Heart right ventricle (tissue), 16 donors: ENCODE measurements at regions of chr20 and their contacts with region 1.

Region 1: DNA sequence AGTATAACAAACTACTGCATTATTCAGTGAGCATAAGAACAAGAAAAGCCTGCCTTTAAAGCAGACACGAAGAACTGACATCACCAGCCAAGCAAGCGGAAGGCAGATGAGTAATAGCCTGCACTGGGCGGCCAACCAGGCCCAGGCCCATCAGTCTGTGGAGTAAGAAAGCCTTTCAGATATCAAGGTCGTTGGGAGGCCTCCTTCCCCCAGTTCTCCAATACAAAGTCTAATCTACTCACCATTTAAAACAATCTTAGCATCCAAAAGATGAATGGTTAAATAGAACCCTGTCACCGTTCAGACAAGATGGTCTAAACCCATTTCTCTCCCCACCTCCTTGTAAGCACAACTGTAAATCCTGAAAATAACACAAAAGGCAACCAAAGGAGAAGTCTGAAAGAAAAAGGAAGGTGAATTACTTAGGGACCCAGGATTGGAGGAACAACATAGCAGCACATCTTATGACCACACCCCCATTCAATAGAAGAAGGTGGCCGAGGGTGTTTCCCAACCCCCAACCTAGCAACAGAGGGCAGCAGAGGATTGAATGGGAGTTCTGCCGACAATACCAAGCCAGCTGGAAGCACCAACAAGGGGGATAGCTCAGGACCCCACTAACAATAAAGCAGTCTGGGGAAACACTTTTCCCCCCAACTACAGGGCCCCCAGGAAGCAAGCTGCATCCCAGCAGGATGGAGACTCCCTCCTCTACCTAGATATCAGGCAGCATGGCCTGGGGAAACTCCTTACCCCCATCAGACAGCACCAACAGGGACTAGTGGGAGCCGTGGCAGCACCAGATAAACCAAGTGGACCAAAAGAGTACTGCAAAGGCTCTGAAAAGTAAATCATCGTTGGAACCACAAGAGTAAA is 67.9 kb downstream of the ZHX3 start:
- DNase-seq: peak; percentile 57 to 65
- ATAC-seq: peak; percentile 62 to 89 (median 81)
- H3K4me3 ChIP-seq: peak overlapping the region in 1 of 10 donors; percentile 3
- H3K27ac ChIP-seq: peak overlapping the region; percentile 83 to 94 (median 88)
- H3K4me1 ChIP-seq: peaks cover 26 to 74% (median 62%) of the 10 kb centered on the region in 9 donors
- H3K27me3 ChIP-seq: no peaks in the 10 kb centered on the region
- CTCF ChIP-seq: peak in 7 of 9 donors; percentile 17 to 58 (median 37)

Region 2: DNA sequence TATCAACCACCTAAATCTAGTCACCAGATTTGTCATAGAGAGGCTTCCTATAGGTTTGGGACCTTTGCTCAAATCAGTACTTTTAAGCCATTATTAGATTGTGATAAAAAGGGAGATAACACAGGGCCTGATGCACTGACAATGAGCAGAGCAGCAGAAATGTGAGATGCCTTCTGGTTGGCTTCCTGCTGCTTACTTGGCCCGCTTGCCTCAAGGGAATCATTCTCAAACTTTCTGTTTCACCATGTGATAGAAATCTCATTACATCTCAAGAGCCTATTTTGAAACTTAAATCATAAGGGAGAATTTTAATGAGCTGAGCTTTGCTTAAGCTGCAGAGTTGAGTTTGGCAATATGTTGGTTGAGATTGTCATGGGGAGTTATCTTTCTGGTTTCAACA is 1681.5 kb before region 1 on chr20:
- intact Hi-C with region 1: no loop called
- DNase-seq: no peak
- ATAC-seq: no peak
- H3K4me3 ChIP-seq: no peak overlapping the region
- H3K27ac ChIP-seq: no peak overlapping the region
- H3K4me1 ChIP-seq: no peaks in the 10 kb centered on the region
- H3K27me3 ChIP-seq: peaks cover 0 to 17% (median 0%) of the 10 kb centered on the region in 7 donors
- CTCF ChIP-seq: no peak

Region 3: DNA sequence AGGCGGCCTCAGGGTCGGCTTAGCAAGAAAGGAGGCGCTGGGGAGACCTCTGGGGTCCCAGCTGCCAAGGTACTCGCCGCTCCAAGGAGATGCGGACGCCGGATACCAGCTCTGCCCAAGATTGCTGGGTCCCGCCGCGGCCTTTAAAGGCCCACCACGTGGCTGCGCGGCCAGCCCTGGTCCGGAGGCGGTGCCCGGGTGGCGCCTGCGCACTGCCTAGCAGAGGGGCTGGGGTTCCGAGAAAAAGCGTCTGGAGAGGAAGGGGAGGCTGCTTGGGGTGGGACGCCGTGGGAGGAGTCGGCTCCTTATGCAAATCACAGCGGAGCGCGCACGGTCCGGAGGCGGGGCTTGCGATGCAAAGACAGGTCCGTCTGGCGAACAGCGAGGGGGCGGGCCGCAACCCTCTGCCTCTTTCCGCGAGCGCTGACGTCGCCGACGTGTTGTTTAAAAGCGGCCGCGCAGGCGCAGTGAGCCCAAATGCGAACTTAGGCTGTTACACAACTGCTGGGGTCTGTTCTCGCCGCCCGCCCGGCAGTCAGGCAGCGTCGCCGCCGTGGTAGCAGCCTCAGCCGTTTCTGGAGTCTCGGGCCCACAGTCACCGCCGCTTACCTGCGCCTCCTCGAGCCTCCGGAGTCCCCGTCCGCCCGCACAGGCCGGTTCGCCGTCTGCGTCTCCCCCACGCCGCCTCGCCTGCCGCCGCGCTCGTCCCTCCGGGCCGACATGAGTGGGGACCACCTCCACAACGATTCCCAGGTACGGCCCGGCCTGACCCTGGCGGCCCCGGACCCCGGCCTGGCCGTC is 221.1 kb before region 1 on chr20 and contains the start of gene TOP1:
- intact Hi-C with region 1: no loop called
- DNase-seq: peak; percentile 100
- ATAC-seq: peak; percentile 98 to 99 (median 99)
- H3K4me3 ChIP-seq: peak within 1 kb of the TSS; percentile 81 to 100 (median 92)
- H3K27ac ChIP-seq: peak within 1 kb of the TSS; percentile 90 to 100 (median 97)
- H3K4me1 ChIP-seq: peaks cover 6 to 51% (median 43%) of the 10 kb centered on the region in 9 donors
- H3K27me3 ChIP-seq: no peaks in the 10 kb centered on the region
- CTCF ChIP-seq: peak in 3 of 9 donors; percentile 14 to 25 (median 18)
- total RNA-seq, gene TOP1: 19.3 to 28.3 (median 23.8) TPM

Region 4: GRCh38 chr20:41136680-41137613 is 112.7 kb before region 1 on chr20 and contains the start of gene PLCG1:
- intact Hi-C with region 1: loop called in 1 of 10 experiments (anchors 5 kb)
- DNase-seq: peak; percentile 91 to 93
- ATAC-seq: peak; percentile 83 to 90 (median 86)
- H3K4me3 ChIP-seq: peak within 1 kb of the TSS; percentile 71 to 99 (median 94)
- H3K27ac ChIP-seq: peak within 1 kb of the TSS; percentile 90 to 100 (median 98)
- H3K4me1 ChIP-seq: peaks cover 21 to 58% (median 50%) of the 10 kb centered on the region in 9 donors
- H3K27me3 ChIP-seq: peaks cover 0 to 9% (median 0%) of the 10 kb centered on the region in 7 donors
- CTCF ChIP-seq: no peak
- total RNA-seq, gene PLCG1: 36.6 to 63.6 (median 47.9) TPM

Region 5: DNA sequence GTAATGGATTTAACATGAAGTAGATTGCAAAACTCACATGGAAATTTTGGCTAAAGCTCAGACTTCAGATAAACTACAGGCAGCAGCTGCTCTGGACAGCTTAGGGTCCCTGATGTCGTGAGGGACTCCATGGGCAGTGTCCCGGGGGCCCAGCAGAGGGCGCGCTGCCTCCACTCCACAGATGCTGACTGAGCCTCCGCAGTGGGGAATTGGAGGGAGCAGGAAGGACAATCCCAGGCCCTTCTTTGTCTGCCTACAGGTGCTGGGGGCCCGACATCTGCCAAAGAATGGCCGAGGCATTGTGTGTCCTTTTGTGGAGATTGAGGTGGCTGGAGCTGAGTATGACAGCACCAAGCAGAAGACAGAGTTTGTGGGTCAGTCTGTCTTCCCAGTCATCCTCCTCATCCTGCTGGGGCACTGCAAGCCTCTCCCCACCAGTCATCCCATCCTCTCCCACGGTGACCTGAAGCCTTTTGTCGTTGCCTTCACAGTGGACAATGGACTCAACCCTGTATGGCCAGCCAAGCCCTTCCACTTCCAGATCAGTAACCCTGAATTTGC is 76.4 kb before region 1 on chr20:
- intact Hi-C with region 1: loop called in 1 of 10 experiments (anchors 5 kb)
- DNase-seq: peak; percentile 89 to 90
- ATAC-seq: peak; percentile 79 to 89 (median 85)
- H3K4me3 ChIP-seq: peak overlapping the region in 1 of 10 donors; percentile 0
- H3K27ac ChIP-seq: peak overlapping the region; percentile 66 to 93 (median 85)
- H3K4me1 ChIP-seq: peaks cover 30 to 72% (median 62%) of the 10 kb centered on the region in 9 donors
- H3K27me3 ChIP-seq: no peaks in the 10 kb centered on the region
- CTCF ChIP-seq: peak; percentile 94 to 99 (median 98)

Region 6: GRCh38 chr20:41213150-41213820 is 36.4 kb before region 1 on chr20:
- intact Hi-C with region 1: no loop called
- DNase-seq: peak in 1 of 2 donors; percentile 18
- ATAC-seq: peak in 6 of 8 donors; percentile 64 to 89 (median 82)
- H3K4me3 ChIP-seq: no peak overlapping the region
- H3K27ac ChIP-seq: peak overlapping the region in 1 of 10 donors; percentile 11
- H3K4me1 ChIP-seq: peaks cover 0 to 20% (median 13%) of the 10 kb centered on the region in 9 donors
- H3K27me3 ChIP-seq: no peaks in the 10 kb centered on the region
- CTCF ChIP-seq: no peak

Region 7: GRCh38 chr20:41232973-41233926 is 16.4 kb before region 1 on chr20:
- intact Hi-C with region 1: loop called in 1 of 10 experiments (anchors 2 kb)
- DNase-seq: no peak
- ATAC-seq: peak; percentile 32 to 70 (median 55)
- H3K4me3 ChIP-seq: peak overlapping the region in 2 of 10 donors; percentile 26 to 34
- H3K27ac ChIP-seq: peak overlapping the region; percentile 63 to 88 (median 82)
- H3K4me1 ChIP-seq: peaks cover 24 to 74% (median 69%) of the 10 kb centered on the region in 9 donors
- H3K27me3 ChIP-seq: no peaks in the 10 kb centered on the region
- CTCF ChIP-seq: no peak

Region 8: GRCh38 chr20:41317536-41318270 is 68.1 kb after region 1 on chr20 and contains the start of gene ZHX3:
- intact Hi-C with region 1: loop called in 5 of 10 experiments (anchors 5 kb)
- DNase-seq: peak; percentile 97 to 99
- ATAC-seq: peak; percentile 97 to 99 (median 98)
- H3K4me3 ChIP-seq: peak within 1 kb of the TSS; percentile 53 to 90 (median 84)
- H3K27ac ChIP-seq: peak within 1 kb of the TSS; percentile 75 to 96 (median 92)
- H3K4me1 ChIP-seq: peaks cover 3 to 50% (median 41%) of the 10 kb centered on the region in 9 donors
- H3K27me3 ChIP-seq: no peaks in the 10 kb centered on the region
- CTCF ChIP-seq: peak in 1 of 9 donors; percentile 9
- total RNA-seq, gene ZHX3: 26.2 to 51.8 (median 31.0) TPM

Region 9: DNA sequence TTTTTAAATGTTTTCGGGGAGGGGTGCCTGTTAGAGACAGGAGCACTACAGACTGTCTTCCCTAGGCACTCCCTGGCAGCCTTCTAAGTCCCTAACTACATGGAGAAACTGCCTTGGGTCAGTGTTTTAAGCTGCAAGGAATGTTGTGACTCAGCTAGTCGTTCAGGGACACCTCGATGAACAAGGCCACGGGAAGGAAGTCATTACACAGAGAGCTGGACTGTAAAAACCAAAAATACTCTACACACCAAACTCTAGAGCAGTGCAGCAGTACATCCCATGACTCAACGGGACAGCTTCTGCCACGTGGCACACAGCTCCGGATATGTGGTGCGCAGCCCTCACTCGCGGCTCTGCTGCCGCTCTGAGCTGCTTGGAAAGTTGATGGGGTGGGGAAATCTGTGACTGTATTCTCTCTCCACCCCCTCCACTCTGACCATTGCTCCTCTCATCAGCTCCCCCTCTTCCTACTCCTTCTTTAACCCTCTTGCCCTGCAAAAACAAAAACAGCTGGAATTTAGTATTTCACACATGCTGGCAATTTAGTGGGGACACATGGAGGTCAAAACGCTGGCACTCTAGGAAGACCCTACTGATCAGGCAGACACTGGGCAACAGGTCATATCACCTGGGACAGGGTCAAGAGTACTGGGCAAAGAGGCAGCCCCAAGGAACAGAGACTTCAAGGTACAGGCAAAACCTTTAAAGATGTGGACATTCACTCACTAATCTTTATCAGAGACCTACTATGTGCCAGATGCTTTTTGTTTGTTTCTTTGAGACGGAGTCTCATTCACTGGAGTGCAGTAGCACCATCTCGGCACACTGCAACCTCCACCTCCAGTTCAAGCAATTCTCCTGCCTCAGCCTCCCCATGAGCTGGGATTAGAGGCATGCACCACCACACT is 80.0 kb after region 1 on chr20:
- intact Hi-C with region 1: loop called in 2 of 10 experiments (anchors 5 kb)
- DNase-seq: peak; percentile 68 to 74
- ATAC-seq: peak; percentile 92 to 99 (median 98)
- H3K4me3 ChIP-seq: peak overlapping the region in 1 of 10 donors; percentile 5
- H3K27ac ChIP-seq: peak overlapping the region; percentile 8 to 89 (median 76)
- H3K4me1 ChIP-seq: peaks cover 6 to 32% (median 25%) of the 10 kb centered on the region in 9 donors
- H3K27me3 ChIP-seq: no peaks in the 10 kb centered on the region
- CTCF ChIP-seq: no peak

Region 10: DNA sequence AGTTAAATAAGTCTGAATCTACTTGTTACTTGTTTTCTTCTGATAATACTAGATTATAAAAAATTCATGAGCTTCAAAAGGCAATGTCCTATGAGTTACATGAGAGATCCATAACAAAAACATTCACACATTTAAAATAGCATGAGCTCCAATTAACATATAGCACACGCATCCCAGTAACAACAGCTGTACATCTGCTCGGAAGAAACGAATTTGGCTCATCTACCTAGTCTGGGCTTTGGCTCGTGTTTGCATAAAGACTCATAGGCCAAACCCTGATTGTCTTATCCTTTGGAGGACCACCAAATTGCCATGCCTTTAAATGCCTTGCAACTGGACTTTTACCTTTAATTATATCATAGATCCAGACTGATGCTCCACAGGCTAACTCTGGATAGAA is 628.3 kb after region 1 on chr20:
- intact Hi-C with region 1: no loop called
- DNase-seq: no peak
- ATAC-seq: no peak
- H3K4me3 ChIP-seq: no peak overlapping the region
- H3K27ac ChIP-seq: no peak overlapping the region
- H3K4me1 ChIP-seq: no peaks in the 10 kb centered on the region
- H3K27me3 ChIP-seq: peaks cover 0 to 42% (median 4%) of the 10 kb centered on the region in 7 donors
- CTCF ChIP-seq: no peak